ENCODE measurements at regions of chr18 and their contacts with region 1.

Region 1: DNA sequence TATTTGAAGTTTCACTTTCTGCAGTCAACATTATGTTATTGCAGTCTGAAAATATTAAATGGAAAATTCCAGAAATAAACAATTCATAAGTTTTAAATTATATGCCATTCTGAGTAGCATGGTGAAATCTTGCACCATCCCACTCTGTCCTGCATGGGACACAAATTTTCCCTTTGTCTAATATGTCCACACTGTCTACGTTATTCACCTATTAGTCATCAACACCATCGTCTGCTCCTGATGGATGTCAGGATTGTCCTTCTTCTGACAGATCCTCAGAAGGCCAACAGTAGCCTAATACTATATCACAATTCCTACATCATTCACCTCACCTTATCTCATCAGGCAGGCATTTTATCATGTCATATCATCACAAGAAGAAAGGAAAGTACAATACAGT is 163.1 kb downstream of the TXNL1 start:
- DNase-seq: no peak

Region 2: GRCh38 chr18:56413862-56414261 is 61.4 kb before region 1 on chr18:
- intact Hi-C with region 1: loop called (anchors 10 kb)
- DNase-seq: no peak

Region 3: GRCh38 chr18:56593906-56594305 is 118.7 kb after region 1 on chr18:
- intact Hi-C with region 1: no loop called
- DNase-seq: no peak